A549 (cell line): ENCODE measurements at regions of chr12 and their contacts with region 1.

Region 1: GRCh38 chr12:52278541-52279421 is 4.3 kb downstream of the KRT86 start:
- DNase-seq: peak; percentile 87 to 92
- ATAC-seq: peak; percentile 31 to 49
- H3K4me3 ChIP-seq: peak overlapping the region; percentile 33; the same call in 2 of the 3 replicates
- H3K27ac ChIP-seq: peak overlapping the region; percentile 96 to 100
- H3K4me1 ChIP-seq: peaks cover 67% of the 10 kb centered on the region
- CTCF ChIP-seq: peak; percentile 96
- EP300 ChIP-seq: no peak
- POLR2A ChIP-seq: no peak
- RAD21 ChIP-seq: peak; percentile 85 to 89

Region 2: DNA sequence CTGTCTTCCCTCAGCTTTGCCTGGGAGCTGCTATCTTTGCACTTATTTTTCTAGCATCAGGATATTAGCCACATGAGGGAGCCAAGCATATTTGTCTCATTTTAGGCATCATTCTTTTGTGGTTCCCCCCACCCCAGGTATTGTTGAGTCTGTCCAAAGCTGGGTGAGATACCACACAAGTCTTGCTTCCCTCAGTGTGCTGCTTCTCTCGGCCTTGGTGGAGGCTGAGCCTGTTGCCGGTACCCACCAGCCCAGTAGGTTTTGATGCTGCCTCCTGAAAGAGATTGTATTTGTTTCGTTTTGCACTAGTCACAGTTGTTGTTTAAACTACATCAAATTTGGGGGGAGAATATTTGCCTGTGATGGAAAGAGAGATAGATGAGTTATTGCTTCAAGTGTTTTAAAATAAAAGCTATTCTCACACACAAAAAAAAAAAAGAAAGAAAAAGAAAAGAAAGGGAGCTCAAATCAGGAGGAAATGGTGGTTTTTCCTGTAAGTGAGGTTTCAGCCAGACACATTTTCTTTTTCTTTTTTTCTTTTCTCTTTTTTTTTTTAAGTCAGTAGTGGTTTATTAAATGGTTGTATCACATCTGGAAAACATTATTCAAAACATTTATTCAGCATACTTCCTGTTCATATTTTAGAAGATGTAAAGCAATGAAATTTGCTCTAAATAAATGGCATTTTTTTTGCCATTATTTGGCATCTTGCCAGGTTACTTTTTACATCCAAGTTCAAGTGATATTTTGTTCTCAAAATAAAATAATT is 795.7 kb before region 1 on chr12:
- CTCF ChIA-PET with region 1: no interaction called
- POLR2A ChIA-PET with region 1: no interaction called
- DNase-seq: no peak
- ATAC-seq: no peak
- H3K4me3 ChIP-seq: no peak overlapping the region
- H3K27ac ChIP-seq: no peak overlapping the region
- H3K4me1 ChIP-seq: no peaks in the 10 kb centered on the region
- CTCF ChIP-seq: no peak
- EP300 ChIP-seq: no peak
- POLR2A ChIP-seq: no peak
- RAD21 ChIP-seq: no peak

Region 3: DNA sequence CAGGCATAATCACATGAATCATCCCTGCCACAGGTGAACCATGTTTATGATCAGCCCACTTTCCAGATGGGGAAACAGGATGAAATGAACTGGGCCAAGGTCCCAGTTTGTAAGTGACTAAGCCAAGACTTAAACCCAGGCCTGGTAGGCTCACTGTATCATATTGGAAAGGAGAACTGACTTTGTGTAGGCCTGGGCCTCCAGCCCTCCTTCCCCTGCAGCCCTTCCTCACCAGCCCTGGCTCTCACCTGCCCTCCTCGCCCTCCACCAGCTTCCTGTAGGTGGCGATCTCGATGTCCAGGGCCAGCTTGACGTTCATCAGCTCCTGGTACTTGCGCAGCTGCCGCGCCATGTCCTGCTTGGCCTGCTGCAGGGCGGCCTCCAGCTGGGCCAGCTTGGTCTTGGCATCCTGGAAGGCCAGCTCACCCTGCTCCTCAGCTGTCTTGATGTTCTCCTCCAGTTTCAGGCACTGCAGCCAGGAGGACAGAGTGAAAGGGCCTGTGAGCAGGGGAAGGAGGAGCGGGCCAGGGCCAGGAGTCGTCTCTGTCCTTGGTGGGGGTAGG is 106.8 kb before region 1 on chr12:
- CTCF ChIA-PET with region 1: interaction called, 20 read pairs
- POLR2A ChIA-PET with region 1: no interaction called
- DNase-seq: peak; percentile 66 to 87
- ATAC-seq: peak; percentile 35 to 72
- H3K4me3 ChIP-seq: no peak overlapping the region
- H3K27ac ChIP-seq: peak overlapping the region; percentile 70 to 85
- H3K4me1 ChIP-seq: peaks cover 82% of the 10 kb centered on the region
- CTCF ChIP-seq: peak; percentile 63
- EP300 ChIP-seq: no peak
- POLR2A ChIP-seq: no peak
- RAD21 ChIP-seq: peak; percentile 64 to 73

Region 4: GRCh38 chr12:52213512-52214420 is 65.0 kb before region 1 on chr12:
- CTCF ChIA-PET with region 1: interaction called, 38 read pairs
- POLR2A ChIA-PET with region 1: interaction called, 8 read pairs
- DNase-seq: peak; percentile 88 to 91
- ATAC-seq: peak; percentile 74 to 84
- H3K4me3 ChIP-seq: no peak overlapping the region
- H3K27ac ChIP-seq: peak overlapping the region; percentile 89 to 96
- H3K4me1 ChIP-seq: peaks cover 76% of the 10 kb centered on the region
- CTCF ChIP-seq: peak; percentile 97
- EP300 ChIP-seq: no peak
- POLR2A ChIP-seq: no peak
- RAD21 ChIP-seq: peak; percentile 97 to 98

Region 5: DNA sequence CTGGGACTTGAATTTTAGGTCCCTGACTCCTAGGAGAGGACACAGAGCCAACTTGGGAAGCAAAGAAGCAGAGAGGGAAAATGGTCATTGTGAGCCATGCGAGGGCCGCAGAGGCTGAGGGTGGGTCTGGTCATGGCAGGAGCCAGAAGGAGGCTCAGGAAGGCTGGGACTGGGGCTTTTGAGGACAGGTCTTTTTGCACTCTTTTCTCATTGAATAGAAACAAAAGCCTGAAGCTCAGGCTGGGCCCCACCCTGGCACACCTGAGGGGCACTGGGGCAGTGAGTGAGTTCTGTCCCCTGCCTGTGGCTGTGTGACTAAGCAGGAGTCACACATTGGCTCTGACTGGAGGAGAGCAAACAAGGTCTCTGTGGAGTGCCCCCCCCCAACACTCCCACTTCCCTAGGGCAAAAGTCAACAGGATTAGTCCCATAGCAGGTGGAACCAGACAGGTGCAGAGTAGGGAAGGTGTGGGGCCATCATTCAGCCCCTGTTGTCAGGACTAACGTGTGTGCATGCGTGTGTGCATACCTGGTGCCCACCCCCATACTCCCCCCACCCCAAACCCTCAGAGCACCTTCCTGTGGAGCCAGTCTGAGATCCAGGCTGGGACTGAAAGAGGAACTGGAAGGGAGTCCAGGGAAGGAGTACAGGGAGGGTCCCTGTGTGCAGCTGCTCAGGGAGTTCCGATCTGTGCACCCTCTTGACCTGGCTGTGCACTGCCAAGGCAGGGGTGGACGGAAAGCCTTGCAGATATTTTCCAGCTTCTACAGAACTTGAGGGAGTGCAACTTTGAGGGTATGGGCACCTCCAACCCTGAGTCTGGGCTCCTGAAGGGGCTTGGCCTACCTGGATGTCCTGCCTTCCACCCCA is 42.7 kb before region 1 on chr12:
- CTCF ChIA-PET with region 1: interaction called, 29 read pairs
- POLR2A ChIA-PET with region 1: interaction called, 54 read pairs
- DNase-seq: peak in 1 of 2 experiments; percentile 24
- ATAC-seq: no peak
- H3K4me3 ChIP-seq: peak overlapping the region; percentile 93
- H3K27ac ChIP-seq: peak overlapping the region; percentile 97
- H3K4me1 ChIP-seq: peaks cover 73% of the 10 kb centered on the region
- CTCF ChIP-seq: no peak
- EP300 ChIP-seq: no peak
- POLR2A ChIP-seq: no peak
- RAD21 ChIP-seq: no peak

Region 6: DNA sequence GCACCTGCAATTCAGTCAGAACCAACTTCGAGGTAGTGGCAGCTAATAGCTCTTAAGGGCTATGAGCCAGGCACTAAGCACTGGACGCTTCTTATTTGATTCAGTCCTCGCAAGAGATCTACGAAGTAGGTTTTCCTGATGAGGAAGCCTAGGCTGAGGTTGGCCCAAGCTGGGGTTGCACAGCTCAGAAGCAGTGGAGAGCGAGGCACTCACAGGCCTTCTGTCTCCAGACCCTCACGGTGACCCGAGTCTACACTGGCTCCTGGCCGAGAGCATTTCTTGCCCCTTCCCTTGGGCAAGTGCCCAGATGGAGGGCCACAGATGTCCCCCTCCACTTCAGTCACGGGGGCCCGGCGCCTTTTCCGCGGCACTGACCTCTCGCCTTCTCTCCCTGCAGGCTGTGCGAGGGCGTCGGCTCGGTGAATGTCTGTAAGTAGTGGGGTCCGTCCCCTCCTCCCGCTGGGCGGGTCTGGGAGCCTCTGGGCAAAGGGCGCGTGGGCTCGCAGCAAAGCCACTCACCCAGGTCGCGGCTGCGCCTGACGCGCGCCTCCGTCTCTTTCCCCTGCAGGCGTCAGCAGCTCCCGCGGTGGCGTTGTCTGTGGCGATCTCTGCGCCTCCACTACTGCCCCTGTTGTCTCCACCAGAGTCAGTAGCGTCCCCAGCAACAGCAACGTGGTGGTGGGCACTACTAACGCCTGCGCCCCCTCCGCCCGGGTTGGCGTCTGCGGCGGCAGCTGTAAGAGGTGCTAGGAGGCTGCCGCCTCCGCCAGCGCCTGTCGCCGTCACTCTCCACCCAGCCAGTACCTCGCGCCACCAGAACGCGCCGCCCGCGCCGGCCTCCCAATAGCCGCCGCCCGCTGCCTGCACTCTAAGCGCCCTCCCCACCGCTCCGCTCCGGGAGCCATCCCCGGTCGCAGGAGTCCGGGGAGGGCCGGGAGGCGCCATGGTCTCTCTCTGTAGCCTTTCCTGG is 29.3 kb after region 1 on chr12:
- CTCF ChIA-PET with region 1: interaction called, 73 read pairs
- POLR2A ChIA-PET with region 1: interaction called, 9 read pairs
- DNase-seq: peak in 1 of 2 experiments; percentile 49
- ATAC-seq: peak; percentile 55 to 77
- H3K4me3 ChIP-seq: no peak overlapping the region
- H3K27ac ChIP-seq: peak overlapping the region; percentile 60 to 87
- H3K4me1 ChIP-seq: peaks cover 6% of the 10 kb centered on the region; the same call in 1 of the 3 replicates
- CTCF ChIP-seq: no peak
- EP300 ChIP-seq: no peak
- POLR2A ChIP-seq: no peak
- RAD21 ChIP-seq: no peak